ENCODE measurements at regions of chr20 and their contacts with region 1.

Region 1: GRCh38 chr20:59242714-59243113 is 57.7 kb upstream of the EDN3 start:
- DNase-seq: no peak
- H3K4me3 ChIP-seq: no peak overlapping the region
- H3K27ac ChIP-seq: no peak overlapping the region
- H3K4me1 ChIP-seq: no peaks in the 10 kb centered on the region
- H3K27me3 ChIP-seq: peaks cover 44% of the 10 kb centered on the region
- CTCF ChIP-seq: no peak
- EP300 ChIP-seq: no peak
- POLR2A ChIP-seq: no peak

Region 2: DNA sequence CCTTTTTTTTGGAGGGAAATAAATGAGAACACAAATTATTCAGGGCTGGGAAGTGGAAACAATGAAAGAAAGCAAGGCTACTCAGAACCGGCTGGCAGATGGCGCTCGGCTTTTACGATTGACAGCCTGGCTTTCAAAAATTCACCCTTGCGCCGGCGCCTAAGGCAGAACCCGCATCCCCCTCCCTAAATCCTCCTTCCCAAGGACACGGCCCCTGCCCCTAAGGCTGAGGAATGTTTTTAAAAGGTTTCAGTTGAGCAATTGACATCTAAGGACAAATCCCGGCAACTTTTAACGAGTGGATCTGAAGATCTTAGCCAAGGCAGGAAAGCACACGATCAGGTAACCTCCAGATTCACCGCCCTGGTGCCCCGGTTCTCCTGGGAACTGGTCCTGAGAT is 373.9 kb before region 1 on chr20:
- in situ Hi-C with region 1: no loop called
- intact Hi-C with region 1: no loop called
- DNase-seq: no peak
- H3K4me3 ChIP-seq: no peak overlapping the region
- H3K27ac ChIP-seq: no peak overlapping the region
- H3K4me1 ChIP-seq: peaks cover 0 to 8% (median 0%) of the 10 kb centered on the region in 4 donors
- H3K27me3 ChIP-seq: peaks cover 6% of the 10 kb centered on the region
- CTCF ChIP-seq: no peak
- EP300 ChIP-seq: no peak
- POLR2A ChIP-seq: no peak

Region 3: DNA sequence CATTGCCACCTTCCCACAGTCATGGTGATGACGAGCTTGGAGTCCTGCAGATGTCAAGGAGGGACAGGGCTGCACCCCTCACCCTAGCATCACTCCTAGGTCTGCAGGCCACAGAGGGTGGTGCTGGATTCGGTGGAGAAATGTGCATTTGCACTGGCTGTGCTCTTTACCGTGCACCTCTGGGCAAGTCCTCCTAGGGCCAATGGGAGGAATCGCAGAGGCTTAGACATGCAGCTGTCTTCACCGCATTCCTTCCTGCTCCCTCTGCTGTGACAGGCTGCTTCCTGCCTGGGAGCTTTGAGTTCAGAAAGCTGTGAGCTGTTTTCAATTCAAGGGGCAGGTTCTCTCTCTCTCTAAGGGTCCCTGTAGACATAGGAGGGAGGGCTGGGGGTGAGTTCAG is 142.8 kb after region 1 on chr20:
- in situ Hi-C with region 1: loop called in 1 of 4 experiments (anchors 25 kb)
- intact Hi-C with region 1: no loop called
- DNase-seq: no peak
- H3K4me3 ChIP-seq: no peak overlapping the region
- H3K27ac ChIP-seq: no peak overlapping the region
- H3K4me1 ChIP-seq: no peaks in the 10 kb centered on the region
- H3K27me3 ChIP-seq: peaks cover 24% of the 10 kb centered on the region
- CTCF ChIP-seq: no peak
- EP300 ChIP-seq: no peak
- POLR2A ChIP-seq: no peak

Measured in transverse colon (tissue), 4 donors.